ENCODE measurements at regions of chr1 and their contacts with region 1.

Region 1: GRCh38 chr1:212455803-212456528 is 23.2 kb downstream of the NENF start:
- DNase-seq: peak; percentile 89
- H3K4me3 Mint-ChIP-seq: no peak overlapping the region
- H3K27ac Mint-ChIP-seq: no peak overlapping the region
- H3K4me1 Mint-ChIP-seq: peaks cover 12% of the 10 kb centered on the region
- H3K27me3 Mint-ChIP-seq: peaks cover 11% of the 10 kb centered on the region

Region 2: GRCh38 chr1:212012034-212012740 is 443.8 kb before region 1 on chr1:
- CTCF ChIA-PET with region 1: interaction called, 21 read pairs
- DNase-seq: peak; percentile 75
- H3K4me3 Mint-ChIP-seq: no peak overlapping the region
- H3K27ac Mint-ChIP-seq: no peak overlapping the region
- H3K4me1 Mint-ChIP-seq: peaks cover 3% of the 10 kb centered on the region
- H3K27me3 Mint-ChIP-seq: no peaks in the 10 kb centered on the region

Region 3: GRCh38 chr1:212070720-212071302 is 385.2 kb before region 1 on chr1:
- CTCF ChIA-PET with region 1: interaction called, 75 read pairs
- DNase-seq: no peak
- H3K4me3 Mint-ChIP-seq: no peak overlapping the region
- H3K27ac Mint-ChIP-seq: no peak overlapping the region
- H3K4me1 Mint-ChIP-seq: no peaks in the 10 kb centered on the region
- H3K27me3 Mint-ChIP-seq: no peaks in the 10 kb centered on the region

Region 4: GRCh38 chr1:212421165-212421564 is 34.8 kb before region 1 on chr1:
- CTCF ChIA-PET with region 1: no interaction called
- DNase-seq: no peak
- H3K4me3 Mint-ChIP-seq: no peak overlapping the region
- H3K27ac Mint-ChIP-seq: no peak overlapping the region
- H3K4me1 Mint-ChIP-seq: no peaks in the 10 kb centered on the region
- H3K27me3 Mint-ChIP-seq: peaks cover 16% of the 10 kb centered on the region

Region 5: GRCh38 chr1:212432706-212433576 is 23.0 kb before region 1 on chr1 and contains the start of gene NENF:
- CTCF ChIA-PET with region 1: interaction called, 18 read pairs
- DNase-seq: peak; percentile 82
- H3K4me3 Mint-ChIP-seq: peak within 1 kb of the TSS; percentile 69
- H3K27ac Mint-ChIP-seq: no peak within 1 kb of the TSS
- H3K4me1 Mint-ChIP-seq: peaks cover 27% of the 10 kb centered on the region
- H3K27me3 Mint-ChIP-seq: no peaks in the 10 kb centered on the region

Region 6: GRCh38 chr1:212477014-212477679 is 21.2 kb after region 1 on chr1:
- CTCF ChIA-PET with region 1: interaction called, 35 read pairs
- DNase-seq: peak; percentile 85
- H3K4me3 Mint-ChIP-seq: no peak overlapping the region
- H3K27ac Mint-ChIP-seq: no peak overlapping the region
- H3K4me1 Mint-ChIP-seq: peaks cover 22% of the 10 kb centered on the region
- H3K27me3 Mint-ChIP-seq: peaks cover 49% of the 10 kb centered on the region

Region 7: GRCh38 chr1:212586206-212587015 is 130.4 kb after region 1 on chr1:
- CTCF ChIA-PET with region 1: no interaction called
- DNase-seq: no peak
- H3K4me3 Mint-ChIP-seq: no peak overlapping the region
- H3K27ac Mint-ChIP-seq: no peak overlapping the region
- H3K4me1 Mint-ChIP-seq: no peaks in the 10 kb centered on the region
- H3K27me3 Mint-ChIP-seq: peaks cover 71% of the 10 kb centered on the region

Measured in activated naive CD4-positive, alpha-beta T cell treated with anti-CD3 and anti-CD28 coated beads, Interleukin-2, amount 10 ng/mL, durations not matched to agents 7 days and 5 days (primary cell).